ENCODE measurements at regions of chr16 and their contacts with region 1.

Region 1: DNA sequence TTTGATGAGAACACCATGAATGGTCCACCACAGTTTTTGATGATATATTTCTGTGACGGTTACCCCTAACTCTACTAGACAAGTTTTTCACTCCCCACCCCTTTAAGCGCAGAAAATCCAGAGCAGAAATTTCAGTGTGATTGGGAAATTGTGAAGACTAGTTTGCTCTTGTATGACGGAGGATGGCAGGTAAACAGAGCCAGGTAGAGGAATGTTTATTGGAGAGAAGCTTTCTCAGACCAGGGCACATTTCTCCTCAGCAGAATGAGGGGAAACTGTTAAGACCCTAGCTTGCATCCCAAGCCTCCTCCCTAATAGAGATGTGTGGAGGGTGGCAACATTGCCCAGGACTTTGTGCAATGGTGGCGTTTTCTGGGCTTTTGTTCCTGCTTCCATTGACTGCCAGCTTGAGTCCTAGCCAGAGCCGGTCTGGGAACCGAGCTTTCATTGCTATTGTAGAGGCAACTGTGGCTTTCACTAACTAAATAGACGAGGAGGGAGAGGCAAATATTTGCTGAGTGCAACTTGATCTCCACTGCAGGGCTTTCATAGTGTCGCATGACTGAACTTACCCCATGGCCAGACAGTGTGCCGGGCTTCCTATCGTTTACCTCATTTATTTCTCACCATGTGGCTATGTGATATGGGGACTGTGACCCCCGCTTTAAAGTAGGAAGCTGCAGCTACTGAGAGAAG is 159.6 kb upstream of the MPHOSPH6 start:
- DNase-seq: no peak
- H3K4me3 ChIP-seq: no peak overlapping the region
- H3K27ac ChIP-seq: no peak overlapping the region
- H3K4me1 ChIP-seq: no peaks in the 10 kb centered on the region
- H3K27me3 ChIP-seq: no peaks in the 10 kb centered on the region
- CTCF ChIP-seq: no peak
- EP300 ChIP-seq: no peak
- POLR2A ChIP-seq: no peak

Region 2: DNA sequence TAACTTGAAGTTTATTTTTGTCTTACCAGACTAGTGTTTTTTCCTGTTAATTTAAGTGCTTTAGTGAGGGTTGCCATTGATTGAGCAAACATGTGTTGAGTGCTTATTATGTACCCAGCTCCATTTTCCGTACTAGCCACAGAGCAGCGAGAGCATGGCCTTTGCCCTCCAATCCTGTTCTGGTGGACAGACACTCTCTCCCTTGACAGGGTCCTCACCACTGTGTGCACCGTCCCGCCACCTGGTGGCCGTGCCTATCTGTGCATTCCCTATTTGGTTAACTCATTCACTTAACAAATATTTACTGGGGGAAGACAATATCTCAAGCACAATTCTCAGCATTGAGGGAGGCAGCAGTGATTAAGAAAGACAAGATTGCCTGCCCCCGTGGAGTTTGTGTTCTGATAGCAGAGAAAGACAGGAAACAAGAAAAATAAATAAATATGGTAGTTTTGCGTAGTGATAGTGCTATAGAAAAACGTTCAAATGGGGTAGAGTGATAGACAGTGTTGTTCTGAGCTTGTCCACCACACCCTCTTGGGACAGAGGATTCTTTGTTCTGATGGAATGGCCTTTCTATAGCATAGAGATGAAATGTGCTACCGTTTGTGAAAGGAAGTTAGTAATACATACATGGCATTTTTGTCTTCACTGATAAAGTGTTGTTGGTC is 310.2 kb after region 1 on chr16:
- in situ Hi-C with region 1: no loop called
- intact Hi-C with region 1: loop called (anchors 2 kb)
- DNase-seq: peak; percentile 65
- H3K4me3 ChIP-seq: no peak overlapping the region
- H3K27ac ChIP-seq: no peak overlapping the region
- H3K4me1 ChIP-seq: peaks cover 4 to 32% (median 12%) of the 10 kb centered on the region in 4 donors
- H3K27me3 ChIP-seq: no peaks in the 10 kb centered on the region
- CTCF ChIP-seq: peak; percentile 62 to 78 (median 73)
- EP300 ChIP-seq: no peak
- POLR2A ChIP-seq: no peak

Measured in transverse colon (tissue), 4 donors.